ENCODE measurements at regions of chr14 and their contacts with region 1.

Region 1: GRCh38 chr14:105689728-105690127 is 163.3 kb downstream of the TMEM121 start:
- DNase-seq: no peak
- ATAC-seq: no peak

Region 2: DNA sequence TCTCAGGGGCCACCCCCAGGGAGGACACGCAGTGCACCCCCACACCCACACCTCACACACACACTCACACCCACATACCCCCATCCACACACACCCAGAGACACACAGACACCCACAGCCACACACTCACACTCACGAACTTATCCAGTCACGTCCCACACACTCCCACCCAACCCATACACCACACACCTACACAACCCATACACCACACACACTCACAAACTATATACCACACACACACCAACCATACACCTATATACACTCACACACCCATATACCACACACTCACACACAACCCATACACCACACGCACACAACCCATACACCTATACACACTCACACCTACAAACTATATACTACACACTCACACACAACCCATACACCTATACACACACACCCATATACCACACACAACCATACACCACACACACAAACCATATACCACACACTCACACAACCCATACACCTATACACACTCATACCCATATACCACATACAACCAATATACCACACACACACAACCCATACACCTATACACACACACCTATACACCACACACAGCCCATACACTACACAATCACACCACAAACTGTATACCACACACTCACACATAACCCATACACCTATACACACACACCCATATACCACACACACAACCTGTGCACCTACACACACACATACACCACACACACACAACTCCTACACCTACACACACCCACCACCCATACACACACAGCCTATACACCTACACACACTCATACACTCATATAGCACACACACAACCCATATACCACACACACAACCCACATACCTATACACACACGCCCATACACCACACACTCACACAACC is 120.6 kb before region 1 on chr14:
- intact Hi-C with region 1: loop called (anchors 5 kb)
- DNase-seq: no peak
- ATAC-seq: no peak

Measured in sciatic nerve (tissue), 2 donors.